ENCODE measurements at regions of chr3 and their contacts with region 1.

Region 1: DNA sequence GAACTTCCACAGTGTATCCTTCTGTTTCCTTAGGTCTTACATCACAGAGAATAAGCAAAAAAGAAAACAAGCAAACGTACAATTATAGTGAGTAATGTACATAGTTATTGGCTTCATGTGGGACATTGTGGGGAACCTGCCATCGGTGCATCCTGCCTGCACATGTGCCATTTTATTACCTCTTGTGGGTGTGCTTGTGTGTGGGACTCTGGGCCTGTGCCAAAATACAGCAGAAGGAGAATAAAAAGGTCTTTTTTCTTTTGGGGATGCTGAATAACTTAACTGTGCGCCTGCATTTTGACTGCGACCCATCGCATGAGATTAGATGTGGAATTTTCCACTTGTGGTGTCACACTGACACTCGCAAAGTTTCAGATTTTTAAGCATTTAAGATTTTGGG is 169.6 kb upstream of the DCBLD2 start:
- DNase-seq: no peak
- H3K4me3 ChIP-seq: no peak overlapping the region
- H3K27ac ChIP-seq: no peak overlapping the region
- H3K4me1 ChIP-seq: no peaks in the 10 kb centered on the region
- H3K27me3 ChIP-seq: no peaks in the 10 kb centered on the region
- CTCF ChIP-seq: no peak

Region 2: DNA sequence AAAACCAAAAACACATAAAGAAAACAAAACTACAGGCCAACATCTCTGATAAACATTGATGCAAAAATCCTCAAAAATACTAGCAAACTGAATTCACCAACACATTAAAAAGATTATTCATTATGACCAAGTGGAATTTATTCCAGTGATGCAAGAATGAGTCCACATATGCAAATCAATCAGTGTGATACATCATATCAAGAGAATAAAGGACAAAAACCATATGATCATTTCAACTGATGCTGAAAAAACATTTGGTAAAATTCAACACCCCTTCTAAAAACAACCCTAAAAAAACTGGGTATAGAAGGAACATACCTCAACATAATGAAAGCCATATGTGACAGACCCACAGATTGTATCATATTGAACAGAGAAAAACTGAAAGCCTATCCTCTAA is 96.0 kb after region 1 on chr3:
- CTCF ChIA-PET with region 1: no interaction called
- POLR2A ChIA-PET with region 1: no interaction called
- intact Hi-C with region 1: no loop called
- DNase-seq: no peak
- H3K4me3 ChIP-seq: no peak overlapping the region
- H3K27ac ChIP-seq: no peak overlapping the region
- H3K4me1 ChIP-seq: no peaks in the 10 kb centered on the region
- H3K27me3 ChIP-seq: no peaks in the 10 kb centered on the region
- CTCF ChIP-seq: no peak

Region 3: DNA sequence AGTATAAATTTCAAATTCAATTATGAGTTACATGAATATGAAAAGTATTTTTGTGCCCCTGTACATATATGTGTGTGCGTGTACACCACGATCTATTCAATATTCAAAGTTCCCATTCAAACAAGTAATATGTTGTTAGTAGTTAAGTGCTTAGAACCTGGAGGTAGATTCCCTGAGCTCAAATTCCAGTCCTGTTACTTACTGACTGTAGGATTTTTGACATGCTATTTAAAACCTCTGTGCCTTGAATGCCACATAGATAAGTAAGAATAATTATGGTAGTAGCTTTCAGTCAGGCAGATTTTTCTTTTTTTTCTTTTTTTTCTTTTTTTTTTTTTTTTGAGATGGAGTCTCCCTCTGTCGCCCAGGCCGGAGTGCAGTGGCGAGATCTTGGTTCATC is 693.3 kb after region 1 on chr3:
- CTCF ChIA-PET with region 1: no interaction called
- POLR2A ChIA-PET with region 1: interaction called, 17 read pairs
- intact Hi-C with region 1: no loop called
- DNase-seq: no peak
- H3K4me3 ChIP-seq: no peak overlapping the region
- H3K27ac ChIP-seq: no peak overlapping the region
- H3K4me1 ChIP-seq: no peaks in the 10 kb centered on the region
- H3K27me3 ChIP-seq: no peaks in the 10 kb centered on the region
- CTCF ChIP-seq: no peak

Measured in PC-9 (cell line).